MCF 10A (cell line): ENCODE measurements at regions of chrX and their contacts with region 1.

Region 1: GRCh38 chrX:43661521-43662240 is 5.6 kb downstream of the MAOA start:
- DNase-seq: peak; percentile 72
- H3K4me3 Mint-ChIP-seq: no peak overlapping the region
- H3K27ac Mint-ChIP-seq: no peak overlapping the region
- H3K4me1 Mint-ChIP-seq: no peaks in the 10 kb centered on the region
- H3K27me3 Mint-ChIP-seq: peaks cover 32% of the 10 kb centered on the region
- CTCF ChIP-seq: no peak

Region 2: GRCh38 chrX:43446752-43447151 is 214.9 kb before region 1 on chrX:
- CTCF ChIA-PET with region 1: no interaction called
- POLR2A ChIA-PET with region 1: no interaction called
- intact Hi-C with region 1: no loop called
- DNase-seq: peak; percentile 12
- H3K4me3 Mint-ChIP-seq: no peak overlapping the region
- H3K27ac Mint-ChIP-seq: no peak overlapping the region
- H3K4me1 Mint-ChIP-seq: no peaks in the 10 kb centered on the region
- H3K27me3 Mint-ChIP-seq: peaks cover 17% of the 10 kb centered on the region
- CTCF ChIP-seq: no peak

Region 3: DNA sequence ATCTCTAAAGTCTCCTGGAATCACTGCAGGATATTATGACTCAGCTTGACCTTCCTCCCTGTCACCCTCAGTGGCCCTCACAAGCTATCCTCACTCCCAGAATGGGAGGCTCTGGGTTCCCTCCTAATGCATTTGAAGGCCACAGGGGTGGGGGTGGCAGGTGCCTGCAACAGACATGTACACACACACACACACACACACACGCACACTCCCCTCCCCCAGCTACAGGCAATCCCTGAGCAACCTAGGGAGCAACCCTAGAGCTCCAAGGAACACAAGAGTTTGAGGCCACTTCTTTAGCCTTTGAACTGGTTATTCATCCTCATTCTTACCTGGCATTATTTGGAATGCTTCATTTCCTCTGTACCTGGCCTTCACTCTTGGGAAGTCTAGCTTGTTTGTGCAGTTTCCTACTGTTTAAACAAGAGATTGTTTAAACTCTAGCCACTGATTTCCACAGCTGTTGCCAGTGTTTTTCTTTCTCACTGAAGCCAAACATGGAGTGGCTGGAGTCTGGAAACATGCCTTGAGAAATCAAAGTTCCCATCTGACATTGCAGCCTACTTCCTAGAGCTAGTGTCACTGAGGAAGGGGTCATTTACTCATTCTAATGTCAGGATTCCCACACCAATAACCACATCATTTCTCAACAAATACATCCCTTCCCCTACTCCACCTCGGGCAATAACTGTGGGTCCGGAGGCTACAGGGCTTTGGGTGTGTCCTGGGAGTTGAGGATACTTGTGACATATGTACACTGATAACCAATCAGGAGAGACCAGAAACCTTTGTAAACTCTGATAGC is 32.1 kb after region 1 on chrX:
- CTCF ChIA-PET with region 1: no interaction called
- POLR2A ChIA-PET with region 1: interaction called, 13 read pairs
- intact Hi-C with region 1: no loop called
- DNase-seq: peak; percentile 28
- H3K4me3 Mint-ChIP-seq: no peak overlapping the region
- H3K27ac Mint-ChIP-seq: peak overlapping the region; percentile 79
- H3K4me1 Mint-ChIP-seq: no peaks in the 10 kb centered on the region
- H3K27me3 Mint-ChIP-seq: peaks cover 51% of the 10 kb centered on the region
- CTCF ChIP-seq: no peak

Region 4: GRCh38 chrX:43773298-43773697 is 111.6 kb after region 1 on chrX:
- CTCF ChIA-PET with region 1: no interaction called
- POLR2A ChIA-PET with region 1: no interaction called
- intact Hi-C with region 1: no loop called
- DNase-seq: no peak
- H3K4me3 Mint-ChIP-seq: no peak overlapping the region
- H3K27ac Mint-ChIP-seq: no peak overlapping the region
- H3K4me1 Mint-ChIP-seq: no peaks in the 10 kb centered on the region
- H3K27me3 Mint-ChIP-seq: peaks cover 69% of the 10 kb centered on the region
- CTCF ChIP-seq: no peak